Ovary (tissue), 10 donors: ENCODE measurements at regions of chr13 and their contacts with region 1.

Region 1: DNA sequence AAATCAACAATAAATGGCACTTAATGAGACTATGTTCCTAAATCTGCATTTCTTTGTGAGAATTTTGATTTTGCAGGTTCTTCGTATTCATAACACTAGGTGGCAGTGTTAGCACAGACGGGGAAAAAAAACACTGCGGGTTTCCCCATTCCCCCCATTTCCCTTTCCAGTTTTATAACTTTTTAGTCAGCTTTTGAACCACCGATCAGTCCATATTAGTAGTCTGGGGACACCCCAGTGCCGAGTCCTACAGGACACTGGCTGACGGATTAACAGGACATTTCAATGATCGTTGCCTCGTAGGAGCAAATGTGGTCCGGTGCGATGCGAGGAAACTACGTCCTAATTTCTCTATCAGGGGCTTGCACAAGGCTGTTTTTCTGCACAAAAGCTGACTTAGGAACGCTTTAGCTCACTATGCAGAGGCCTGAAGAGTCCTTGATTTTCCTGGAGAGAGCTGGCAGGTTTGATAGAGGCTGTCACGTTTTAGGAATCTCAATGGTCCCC is 234.3 kb downstream of the LMO7 start:
- DNase-seq: peak in 1 of 5 donors; percentile 22
- H3K4me3 ChIP-seq: no peak overlapping the region
- H3K27ac ChIP-seq: no peak overlapping the region
- H3K4me1 ChIP-seq: peaks cover 3% of the 10 kb centered on the region
- H3K27me3 ChIP-seq: no peaks in the 10 kb centered on the region
- CTCF ChIP-seq: peak in 1 of 3 donors; percentile 26
- EP300 ChIP-seq: no peak
- POLR2A ChIP-seq: no peak

Region 2: GRCh38 chr13:75687150-75687763 is 183.2 kb before region 1 on chr13:
- intact Hi-C with region 1: loop called in 2 of 4 experiments (anchors 5 to 10 kb)
- DNase-seq: no peak
- H3K4me3 ChIP-seq: no peak overlapping the region
- H3K27ac ChIP-seq: no peak overlapping the region
- H3K4me1 ChIP-seq: peaks cover 2% of the 10 kb centered on the region
- H3K27me3 ChIP-seq: no peaks in the 10 kb centered on the region
- CTCF ChIP-seq: peak in 1 of 3 donors; percentile 21
- EP300 ChIP-seq: no peak
- POLR2A ChIP-seq: no peak

Region 3: GRCh38 chr13:75749407-75749806 is 121.0 kb before region 1 on chr13:
- intact Hi-C with region 1: no loop called
- DNase-seq: peak in 2 of 5 donors; percentile 27 to 43
- H3K4me3 ChIP-seq: no peak overlapping the region
- H3K27ac ChIP-seq: no peak overlapping the region
- H3K4me1 ChIP-seq: peaks cover 4% of the 10 kb centered on the region
- H3K27me3 ChIP-seq: no peaks in the 10 kb centered on the region
- CTCF ChIP-seq: no peak
- EP300 ChIP-seq: no peak
- POLR2A ChIP-seq: no peak

Region 4: GRCh38 chr13:76473552-76474134 is 603.2 kb after region 1 on chr13:
- intact Hi-C with region 1: loop called in 3 of 4 experiments (anchors 5 kb)
- DNase-seq: peak; percentile 55 to 81 (median 63)
- H3K4me3 ChIP-seq: no peak overlapping the region
- H3K27ac ChIP-seq: no peak overlapping the region
- H3K4me1 ChIP-seq: no peaks in the 10 kb centered on the region
- H3K27me3 ChIP-seq: no peaks in the 10 kb centered on the region
- CTCF ChIP-seq: peak; percentile 74 to 84 (median 79)
- EP300 ChIP-seq: no peak
- POLR2A ChIP-seq: no peak

Region 5: GRCh38 chr13:76903544-76904162 is 1033.2 kb after region 1 on chr13:
- intact Hi-C with region 1: loop called (anchors 5 to 10 kb)
- DNase-seq: peak; percentile 23 to 69 (median 48)
- H3K4me3 ChIP-seq: no peak overlapping the region
- H3K27ac ChIP-seq: no peak overlapping the region
- H3K4me1 ChIP-seq: no peaks in the 10 kb centered on the region
- H3K27me3 ChIP-seq: no peaks in the 10 kb centered on the region
- CTCF ChIP-seq: peak; percentile 85 to 87 (median 86)
- EP300 ChIP-seq: no peak
- POLR2A ChIP-seq: no peak